Breast epithelium (tissue), 4 donors: ENCODE measurements at regions of chr1 and their contacts with region 1.

Region 1: GRCh38 chr1:44029906-44030604 is 1.2 kb downstream of the SLC6A9 start:
- DNase-seq: peak; percentile 80 to 82
- H3K4me3 ChIP-seq: peak overlapping the region; percentile 63 to 84 (median 78)
- H3K27ac ChIP-seq: peak overlapping the region; percentile 76 to 80
- H3K4me1 ChIP-seq: peaks cover 0 to 12% of the 10 kb centered on the region in 2 donors
- H3K27me3 ChIP-seq: no peaks in the 10 kb centered on the region
- CTCF ChIP-seq: no peak
- POLR2A ChIP-seq: no peak

Region 2: DNA sequence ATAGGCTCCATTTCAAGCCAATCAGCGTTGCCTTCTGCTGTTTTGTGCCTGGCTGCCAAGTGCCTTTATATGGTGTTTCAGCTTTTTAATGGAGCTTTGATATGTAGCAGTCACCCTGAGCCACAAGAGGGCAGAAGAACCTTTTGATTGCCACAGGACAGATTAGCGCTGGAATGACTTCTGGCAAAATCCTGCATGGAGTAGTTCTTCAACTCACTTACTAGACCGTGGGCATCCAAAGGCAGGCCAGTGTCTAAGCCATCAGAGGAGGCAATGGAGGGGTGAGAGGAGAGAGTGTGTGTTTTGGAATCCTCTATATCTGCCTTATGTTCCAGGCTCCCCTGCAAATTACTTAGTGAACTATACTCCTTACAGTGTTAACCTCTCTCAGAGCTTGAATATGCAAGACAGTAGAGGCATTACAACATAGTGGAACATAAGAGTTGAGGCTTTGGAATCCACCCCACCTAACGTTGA is 266.5 kb before region 1 on chr1:
- intact Hi-C with region 1: loop called (anchors 10 kb)
- DNase-seq: peak; percentile 58 to 82
- H3K4me3 ChIP-seq: no peak overlapping the region
- H3K27ac ChIP-seq: no peak overlapping the region
- H3K4me1 ChIP-seq: no peaks in the 10 kb centered on the region
- H3K27me3 ChIP-seq: no peaks in the 10 kb centered on the region
- CTCF ChIP-seq: peak; percentile 82 to 94 (median 88)
- POLR2A ChIP-seq: no peak

Region 3: GRCh38 chr1:43985984-43986595 is 44.0 kb before region 1 on chr1:
- intact Hi-C with region 1: loop called (anchors 1 kb)
- DNase-seq: no peak
- H3K4me3 ChIP-seq: no peak overlapping the region
- H3K27ac ChIP-seq: no peak overlapping the region
- H3K4me1 ChIP-seq: peaks cover 0 to 3% of the 10 kb centered on the region in 2 donors
- H3K27me3 ChIP-seq: no peaks in the 10 kb centered on the region
- CTCF ChIP-seq: no peak
- POLR2A ChIP-seq: no peak